ENCODE measurements at regions of chr4 and their contacts with region 1.

Region 1: DNA sequence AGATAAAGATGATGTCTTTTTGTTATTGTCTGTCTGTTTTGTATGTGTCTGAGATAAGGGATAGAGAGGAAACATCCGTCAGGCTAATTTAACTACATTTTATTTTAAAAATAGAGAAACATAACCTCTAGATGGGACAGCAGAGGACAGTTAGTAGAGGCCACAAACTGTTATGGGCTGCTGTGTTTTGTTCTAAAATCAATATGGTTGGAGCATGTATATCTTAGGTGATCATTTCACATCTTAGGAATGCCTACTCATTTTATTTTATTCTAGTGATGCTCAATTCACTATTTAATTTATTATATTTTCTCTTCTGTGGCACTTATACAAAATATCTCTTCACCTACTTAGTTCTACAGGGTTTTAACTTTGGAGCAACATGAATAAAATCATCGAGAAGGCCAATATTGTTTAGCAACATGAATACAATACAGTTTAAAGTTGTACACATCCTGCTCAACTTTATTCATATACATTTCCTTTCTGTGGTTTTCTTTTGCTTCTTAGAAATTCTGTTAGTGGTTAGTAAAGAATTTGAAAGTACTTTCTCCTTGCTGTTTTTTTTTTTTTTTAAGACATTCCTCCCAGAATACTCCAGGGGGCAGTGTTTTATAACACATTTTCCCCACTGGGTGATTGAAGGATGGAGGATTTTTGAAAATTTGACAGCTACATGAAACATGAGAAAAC is 392.9 kb downstream of the UNC5C start:
- DNase-seq: peak; percentile 7
- H3K4me3 ChIP-seq: no peak overlapping the region
- CTCF ChIP-seq: peak; percentile 40

Region 2: DNA sequence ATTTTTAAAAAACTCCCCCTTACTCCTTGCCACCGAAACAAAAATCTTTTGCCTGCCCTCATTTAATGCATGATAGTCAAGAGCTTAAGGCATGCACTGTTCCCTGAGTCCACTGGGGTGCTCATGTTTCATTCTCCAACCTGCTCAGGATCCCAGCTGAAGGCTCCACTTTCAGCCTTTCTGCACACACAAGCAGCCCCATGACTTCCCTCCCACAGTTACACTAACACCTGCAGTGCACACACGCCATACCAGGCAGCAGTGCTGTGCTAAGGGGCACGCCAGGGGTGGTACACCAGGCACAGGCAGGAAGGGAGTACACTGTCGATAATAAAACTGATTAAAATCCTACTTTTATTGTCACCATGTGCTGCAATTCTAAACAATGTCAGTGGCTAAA is 13.0 kb before region 1 on chr4:
- CTCF ChIA-PET with region 1: interaction called, 10 read pairs
- POLR2A ChIA-PET with region 1: no interaction called
- DNase-seq: no peak
- H3K4me3 ChIP-seq: no peak overlapping the region
- CTCF ChIP-seq: no peak

Region 3: DNA sequence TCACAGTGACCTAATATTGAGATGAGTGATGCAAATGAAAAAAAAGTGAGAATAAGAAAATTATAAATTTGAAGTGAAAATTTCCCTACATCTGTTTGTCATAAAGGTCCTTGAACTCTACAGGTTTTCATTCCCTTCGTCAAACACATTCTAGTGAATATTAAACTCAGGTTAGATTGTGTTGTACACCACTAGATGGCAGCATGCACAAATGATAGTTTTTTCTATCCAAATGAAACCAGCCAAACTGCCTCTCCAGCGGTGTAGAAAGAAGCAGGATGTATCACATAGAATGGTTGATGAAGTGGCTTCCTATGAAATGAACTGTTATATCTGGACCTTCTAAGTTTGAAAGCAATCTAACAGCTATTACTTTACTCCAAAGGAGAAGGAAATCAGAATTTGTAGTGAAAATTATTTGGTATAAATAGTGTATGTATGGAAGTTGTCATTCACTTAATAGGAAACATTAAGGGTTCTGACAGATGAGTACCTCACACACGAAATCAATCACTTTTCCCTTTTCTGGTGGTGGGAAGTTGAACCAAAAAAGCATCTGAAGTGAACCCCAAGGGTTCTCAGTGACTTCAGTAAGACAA is 10.1 kb after region 1 on chr4:
- CTCF ChIA-PET with region 1: interaction called, 28 read pairs
- POLR2A ChIA-PET with region 1: no interaction called
- DNase-seq: peak; percentile 26
- H3K4me3 ChIP-seq: no peak overlapping the region
- CTCF ChIP-seq: peak; percentile 49

Measured in AG04449 (cell line).